Heart right ventricle (tissue), 16 donors: ENCODE measurements at regions of chr9 and their contacts with region 1.

Region 1: DNA sequence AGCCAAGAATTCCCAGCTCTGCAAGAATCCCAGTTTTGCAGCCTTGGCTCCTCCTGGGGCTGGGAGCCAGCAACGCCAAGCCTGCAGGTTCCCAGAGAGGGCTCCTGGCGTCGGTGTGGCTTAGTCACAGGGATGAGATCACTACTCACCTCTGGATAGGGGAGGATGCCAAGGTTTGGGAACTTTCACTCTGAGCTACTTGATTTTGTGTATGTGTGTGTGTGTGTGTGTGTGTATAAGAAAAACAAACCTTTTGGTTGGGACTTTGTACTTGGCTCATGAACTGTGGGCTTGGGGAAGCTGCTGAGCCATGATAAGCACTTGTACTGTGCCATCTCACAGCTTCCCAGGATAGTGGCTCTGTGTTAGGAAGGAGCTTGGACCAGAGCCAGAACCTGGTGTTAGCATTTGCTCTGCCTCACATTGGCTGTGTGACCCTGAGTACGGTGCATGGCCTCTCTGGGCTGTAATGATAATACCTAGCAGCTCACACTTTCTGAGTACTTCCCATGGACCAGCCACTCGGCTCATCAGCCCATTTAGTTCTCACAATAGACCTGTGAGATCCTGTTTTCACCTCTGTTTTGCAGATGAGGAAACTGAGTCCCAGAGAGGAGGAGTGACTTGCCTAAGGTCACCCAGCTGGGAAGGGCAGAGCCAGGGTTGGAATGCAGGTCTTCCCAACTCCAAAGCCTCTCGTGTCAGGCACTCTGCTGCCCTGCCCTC is 41.4 kb upstream of the DAB2IP start:
- DNase-seq: peak; percentile 54 to 57
- ATAC-seq: peak; percentile 16 to 75 (median 48)
- H3K4me3 ChIP-seq: no peak overlapping the region
- H3K27ac ChIP-seq: peak overlapping the region in 9 of 10 donors; percentile 59 to 93 (median 83)
- H3K4me1 ChIP-seq: peaks cover 30 to 94% (median 84%) of the 10 kb centered on the region in 9 donors
- H3K27me3 ChIP-seq: peaks cover 0 to 5% (median 0%) of the 10 kb centered on the region in 7 donors
- CTCF ChIP-seq: peak in 1 of 9 donors; percentile 16

Region 2: GRCh38 chr9:121566481-121567465 is 43.2 kb before region 1 on chr9:
- intact Hi-C with region 1: loop called in 2 of 10 experiments (anchors 5 kb)
- DNase-seq: peak; percentile 43 to 63
- ATAC-seq: peak; percentile 42 to 69 (median 52)
- H3K4me3 ChIP-seq: peak overlapping the region in 9 of 10 donors; percentile 32 to 62 (median 47)
- H3K27ac ChIP-seq: peak overlapping the region; percentile 60 to 96 (median 86)
- H3K4me1 ChIP-seq: peaks cover 24 to 50% (median 40%) of the 10 kb centered on the region in 9 donors
- H3K27me3 ChIP-seq: no peaks in the 10 kb centered on the region
- CTCF ChIP-seq: no peak